ENCODE measurements at regions of chr19 and their contacts with region 1.

Region 1: GRCh38 chr19:39833464-39834286 is at the start of gene DYRK1B:
- DNase-seq: peak; percentile 98
- H3K4me3 ChIP-seq: peak within 1 kb of the TSS; percentile 93
- H3K27ac ChIP-seq: peak within 1 kb of the TSS; percentile 91
- H3K4me1 ChIP-seq: peaks cover 9% of the 10 kb centered on the region
- H3K27me3 ChIP-seq: no peaks in the 10 kb centered on the region
- CTCF ChIP-seq: no peak
- total RNA-seq, gene DYRK1B: 16.0 and 19.0 TPM in 2 replicates

Region 2: DNA sequence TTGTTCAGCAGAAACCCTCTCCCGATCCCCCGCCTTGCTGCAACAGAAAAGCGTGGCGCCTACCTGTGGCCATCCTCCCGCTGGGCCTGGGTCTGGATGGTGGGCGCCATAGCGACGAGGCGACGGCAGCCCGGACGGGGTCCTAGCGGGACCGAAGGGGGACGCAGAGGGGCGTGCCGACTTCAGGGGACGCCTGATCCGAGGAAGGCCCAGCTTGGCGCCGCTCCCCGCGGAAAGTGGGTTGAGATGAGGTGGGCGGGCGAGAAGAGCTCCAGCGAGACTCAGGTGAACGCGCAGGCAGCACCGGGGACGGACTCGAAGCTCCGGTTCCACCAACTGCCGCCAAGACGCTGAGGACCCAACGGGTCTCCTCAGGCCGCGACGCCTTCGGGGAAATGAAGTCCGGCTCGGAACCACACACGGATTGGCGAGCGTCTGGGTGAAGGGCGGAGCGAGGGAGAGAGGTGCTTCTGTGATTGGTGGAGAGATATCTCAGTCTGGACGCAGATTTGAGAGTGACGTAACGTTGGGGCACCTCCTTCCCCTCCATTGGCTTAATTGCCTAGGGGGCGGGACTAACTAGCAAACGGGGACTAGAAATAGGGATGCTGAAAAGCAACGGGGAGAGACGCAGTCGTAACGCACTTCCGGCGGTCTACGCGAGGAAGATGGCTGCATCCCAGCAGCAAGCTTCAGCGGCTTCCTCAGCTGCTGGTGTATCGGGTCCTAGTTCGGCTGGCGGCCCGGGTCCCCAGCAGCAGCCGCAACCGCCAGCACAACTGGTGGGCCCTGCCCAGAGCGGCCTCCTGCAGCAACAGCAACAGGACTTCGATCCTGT is 442.7 kb before region 1 on chr19 and contains the starts of genes MED29 and PAF1:
- CTCF ChIA-PET with region 1: no interaction called
- POLR2A ChIA-PET with region 1: interaction called, 17 read pairs
- intact Hi-C with region 1: no loop called
- DNase-seq: peak; percentile 100
- H3K4me3 ChIP-seq: peak within 1 kb of the TSS; percentile 77
- H3K27ac ChIP-seq: peak within 1 kb of the TSS; percentile 96
- H3K4me1 ChIP-seq: peaks cover 17% of the 10 kb centered on the region
- H3K27me3 ChIP-seq: no peaks in the 10 kb centered on the region
- CTCF ChIP-seq: no peak
- total RNA-seq, gene MED29: 37.1 and 41.9 TPM in 2 replicates
- total RNA-seq, gene PAF1: 70.2 and 73.3 TPM in 2 replicates

Region 3: GRCh38 chr19:39502640-39503417 is 330.8 kb before region 1 on chr19:
- CTCF ChIA-PET with region 1: no interaction called
- POLR2A ChIA-PET with region 1: interaction called, 14 read pairs
- intact Hi-C with region 1: no loop called
- DNase-seq: peak; percentile 91
- H3K4me3 ChIP-seq: no peak overlapping the region
- H3K27ac ChIP-seq: no peak overlapping the region
- H3K4me1 ChIP-seq: peaks cover 14% of the 10 kb centered on the region
- H3K27me3 ChIP-seq: peaks cover 26% of the 10 kb centered on the region
- CTCF ChIP-seq: peak; percentile 66

Region 4: DNA sequence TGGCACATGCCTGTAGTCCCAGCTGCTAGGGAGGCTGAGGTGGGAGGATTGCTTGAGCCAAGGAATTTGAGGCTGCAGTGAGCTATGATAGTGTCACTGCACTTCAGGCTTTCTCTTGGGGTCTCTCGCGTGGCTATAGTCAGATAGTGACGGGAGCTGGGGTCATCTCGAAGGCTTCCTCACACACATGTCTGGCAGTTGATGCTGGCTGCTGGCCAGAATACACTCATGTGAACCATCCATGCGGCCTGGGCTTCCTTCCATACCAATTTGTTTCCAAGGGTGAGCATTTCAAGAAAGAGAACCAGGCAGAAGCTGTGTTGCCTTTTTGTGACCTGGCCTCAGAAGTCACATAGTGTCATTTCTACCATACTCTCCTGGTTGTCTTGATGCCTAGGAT is 28.6 kb before region 1 on chr19:
- CTCF ChIA-PET with region 1: no interaction called
- POLR2A ChIA-PET with region 1: interaction called, 12 read pairs
- intact Hi-C with region 1: no loop called
- DNase-seq: no peak
- H3K4me3 ChIP-seq: no peak overlapping the region
- H3K27ac ChIP-seq: no peak overlapping the region
- H3K4me1 ChIP-seq: no peaks in the 10 kb centered on the region
- H3K27me3 ChIP-seq: peaks cover 5% of the 10 kb centered on the region
- CTCF ChIP-seq: no peak

Region 5: DNA sequence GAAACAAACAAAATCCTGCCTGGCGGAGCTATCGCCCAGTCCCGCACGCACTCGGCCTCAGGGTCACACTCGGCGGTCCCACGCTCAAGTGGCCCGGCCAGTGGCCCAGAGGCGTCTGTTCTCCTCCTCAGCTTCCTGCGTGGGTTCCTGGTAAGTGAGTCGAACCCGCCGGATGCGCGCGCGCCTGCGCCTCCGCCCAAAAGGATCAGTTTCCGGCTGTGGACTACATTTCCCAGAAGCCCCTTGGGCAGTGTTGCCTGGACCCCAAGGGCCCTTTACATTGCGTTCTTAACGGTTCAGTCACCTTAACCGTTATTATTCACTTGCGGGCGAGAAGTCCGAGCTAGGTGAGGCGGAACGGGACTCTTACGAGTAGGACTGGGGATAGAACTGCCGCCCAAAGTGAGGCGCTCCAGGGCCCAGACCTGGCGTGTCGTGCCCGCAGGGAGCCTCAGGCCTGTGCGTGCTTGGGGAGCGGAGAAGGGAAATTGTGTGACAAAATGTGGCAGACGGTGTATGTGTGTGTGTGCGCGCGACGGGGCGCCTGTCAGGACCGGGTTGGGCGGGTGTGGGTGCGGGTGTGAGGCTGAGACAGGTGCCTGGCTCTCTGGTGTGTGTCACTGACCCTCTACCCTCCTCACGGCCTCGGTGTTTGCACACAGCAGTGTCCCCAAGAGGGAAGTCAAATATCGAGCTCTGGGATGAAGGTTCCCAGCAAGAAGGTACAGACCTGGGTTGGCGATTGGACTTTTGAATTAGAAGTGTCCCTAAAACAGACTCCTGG is 163.3 kb after region 1 on chr19 and contains the start of gene ZNF546:
- CTCF ChIA-PET with region 1: no interaction called
- POLR2A ChIA-PET with region 1: no interaction called
- intact Hi-C with region 1: no loop called
- DNase-seq: peak; percentile 94
- H3K4me3 ChIP-seq: peak within 1 kb of the TSS; percentile 70
- H3K27ac ChIP-seq: peak within 1 kb of the TSS; percentile 85
- H3K4me1 ChIP-seq: peaks cover 9% of the 10 kb centered on the region
- H3K27me3 ChIP-seq: no peaks in the 10 kb centered on the region
- CTCF ChIP-seq: no peak
- total RNA-seq, gene ZNF546: 5.5 and 5.6 TPM in 2 replicates

Measured in A673 (cell line).